Posterior vena cava (tissue), 2 donors: ENCODE measurements at regions of chr12 and their contacts with region 1.

Region 1: GRCh38 chr12:67320614-67321295 is 51.6 kb downstream of the CAND1 start:
- DNase-seq: no peak

Region 2: DNA sequence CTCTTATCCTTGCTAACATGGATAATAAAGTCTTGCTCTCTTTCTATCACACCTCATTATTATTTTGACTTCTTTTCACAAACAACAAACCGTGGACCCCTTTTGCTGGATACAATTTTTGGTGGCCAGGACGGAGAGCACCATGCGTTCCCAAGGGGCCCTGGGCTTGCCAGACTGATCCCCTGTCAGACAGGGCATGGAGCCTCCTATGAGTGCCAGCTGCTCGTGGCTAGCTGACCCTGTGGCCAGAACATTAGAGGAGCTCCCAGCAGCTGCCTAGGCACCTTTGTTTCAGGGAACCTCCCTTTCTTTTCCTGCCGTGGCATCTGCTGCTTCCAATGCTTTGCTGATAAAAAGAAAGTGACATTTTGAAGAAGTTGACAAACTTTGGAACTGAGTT is 64.1 kb before region 1 on chr12:
- intact Hi-C with region 1: loop called in 1 of 2 experiments (anchors 2 kb)
- DNase-seq: no peak